ENCODE measurements at regions of chr10 and their contacts with region 1.

Region 1: DNA sequence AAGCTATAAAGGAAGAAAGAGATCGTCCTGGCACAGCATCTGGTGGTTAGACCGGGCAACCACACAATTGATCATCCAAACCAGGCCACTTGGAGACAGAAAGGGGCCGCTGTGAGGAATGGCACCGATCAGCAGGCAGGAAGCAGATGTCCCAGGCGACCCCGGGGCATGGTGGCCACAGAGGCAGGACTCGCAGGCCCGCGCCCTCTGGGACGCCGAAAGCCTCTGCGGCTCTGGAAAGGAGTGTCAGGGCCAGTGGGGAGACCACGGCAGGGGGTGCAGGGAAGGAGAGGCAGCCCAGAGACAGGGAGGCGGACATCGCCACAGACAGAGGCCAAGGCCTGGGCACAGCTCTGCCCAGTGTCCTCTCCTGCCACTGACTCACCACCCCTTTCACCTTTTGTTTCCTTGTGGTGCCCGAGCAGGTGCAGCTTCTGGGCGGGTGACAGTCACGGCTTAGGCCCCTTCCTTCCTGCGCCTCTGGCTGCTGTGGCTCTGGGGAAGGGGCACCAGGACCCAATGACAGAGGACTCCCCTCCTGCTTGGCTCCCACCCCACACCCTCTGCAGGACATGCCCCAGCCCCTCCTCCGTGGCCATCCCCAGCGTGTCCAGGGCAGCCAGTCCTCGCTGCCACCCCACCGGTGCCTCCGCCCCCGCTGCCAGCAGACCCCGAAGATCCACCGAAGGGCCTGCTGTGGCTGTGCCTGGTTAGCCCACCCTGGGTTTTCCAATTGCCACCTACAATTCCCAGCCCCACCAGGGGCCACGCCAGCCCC is 10.9 kb downstream of the STK32C start:
- DNase-seq: no peak
- ATAC-seq: no peak
- H3K4me3 ChIP-seq: no peak overlapping the region
- H3K27ac ChIP-seq: no peak overlapping the region
- H3K4me1 ChIP-seq: no peaks in the 10 kb centered on the region
- H3K27me3 ChIP-seq: peaks cover 0 to 8% (median 2%) of the 10 kb centered on the region in 3 donors
- CTCF ChIP-seq: no peak

Region 2: DNA sequence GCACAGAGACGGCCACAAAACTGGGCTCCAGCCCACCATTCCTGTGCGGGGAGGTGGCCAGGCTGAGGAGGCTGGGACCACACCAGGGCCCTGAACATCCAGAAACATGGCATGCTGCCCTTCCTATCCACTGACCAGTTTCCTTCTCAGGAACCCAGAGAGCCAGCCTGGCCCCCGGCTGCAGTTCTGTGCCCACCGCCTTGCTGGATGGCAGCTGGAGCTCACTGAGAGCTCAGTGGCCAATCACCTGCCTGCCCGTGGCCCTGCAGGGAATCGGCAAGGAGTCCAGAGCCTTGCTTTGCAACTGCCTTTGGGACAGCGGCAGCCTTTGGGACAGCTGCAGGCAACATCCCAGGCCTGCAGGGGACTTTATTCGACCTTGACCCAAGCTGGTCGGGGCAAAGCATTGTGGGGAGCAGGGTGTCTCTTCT is 19.5 kb before region 1 on chr10:
- intact Hi-C with region 1: loop called in 1 of 2 experiments (anchors 1 kb)
- DNase-seq: peak in 1 of 2 donors; percentile 11
- ATAC-seq: no peak
- H3K4me3 ChIP-seq: no peak overlapping the region
- H3K27ac ChIP-seq: no peak overlapping the region
- H3K4me1 ChIP-seq: no peaks in the 10 kb centered on the region
- H3K27me3 ChIP-seq: peaks cover 0 to 15% (median 5%) of the 10 kb centered on the region in 3 donors
- CTCF ChIP-seq: no peak

Measured in psoas muscle (tissue), 8 donors.